GM13976 (cell line): ENCODE measurements at regions of chr4 and their contacts with region 1.

Region 1: DNA sequence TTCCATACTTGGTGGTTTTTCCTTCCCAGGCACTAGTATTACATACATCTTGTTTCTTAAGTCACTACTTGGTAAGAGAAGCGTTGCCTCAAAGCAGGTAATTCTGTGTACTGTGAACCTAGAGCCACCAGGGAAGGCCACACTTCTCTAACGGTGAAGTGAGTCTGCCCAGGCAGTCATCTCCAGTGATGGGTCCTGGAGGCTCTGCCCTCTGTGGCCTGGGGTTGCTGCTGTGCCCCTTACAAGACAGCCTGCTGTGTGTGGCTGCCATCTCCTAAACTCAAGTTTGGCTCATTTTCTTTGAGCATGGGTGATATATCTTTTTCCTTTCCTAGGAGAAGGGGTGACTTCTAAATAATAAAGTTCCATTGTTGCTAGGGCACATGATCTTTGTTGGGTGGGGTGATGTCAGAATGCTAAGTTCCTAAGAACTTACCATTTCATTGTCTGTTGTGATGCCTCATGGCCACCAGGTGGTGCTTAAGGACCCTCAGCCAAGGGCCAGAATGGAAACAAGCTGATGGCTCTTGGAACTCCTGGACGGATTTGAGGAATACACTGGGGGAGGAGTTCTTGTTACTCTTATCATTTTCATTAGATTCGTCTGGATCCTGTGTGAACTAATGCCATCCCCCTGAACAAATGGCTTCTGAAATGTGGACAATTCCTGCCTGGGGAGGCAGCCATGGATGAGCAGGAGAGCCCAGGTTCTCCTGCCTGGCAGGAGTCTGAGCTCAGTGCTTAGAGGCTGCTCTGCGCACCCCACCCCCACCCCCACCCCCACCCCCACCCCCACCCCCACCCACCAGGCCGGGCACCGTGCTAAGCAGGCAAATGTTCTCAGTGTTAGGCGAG is 41.1 kb upstream of the WDR1 start:
- DNase-seq: peak; percentile 79
- CTCF ChIP-seq: peak; percentile 74

Region 2: DNA sequence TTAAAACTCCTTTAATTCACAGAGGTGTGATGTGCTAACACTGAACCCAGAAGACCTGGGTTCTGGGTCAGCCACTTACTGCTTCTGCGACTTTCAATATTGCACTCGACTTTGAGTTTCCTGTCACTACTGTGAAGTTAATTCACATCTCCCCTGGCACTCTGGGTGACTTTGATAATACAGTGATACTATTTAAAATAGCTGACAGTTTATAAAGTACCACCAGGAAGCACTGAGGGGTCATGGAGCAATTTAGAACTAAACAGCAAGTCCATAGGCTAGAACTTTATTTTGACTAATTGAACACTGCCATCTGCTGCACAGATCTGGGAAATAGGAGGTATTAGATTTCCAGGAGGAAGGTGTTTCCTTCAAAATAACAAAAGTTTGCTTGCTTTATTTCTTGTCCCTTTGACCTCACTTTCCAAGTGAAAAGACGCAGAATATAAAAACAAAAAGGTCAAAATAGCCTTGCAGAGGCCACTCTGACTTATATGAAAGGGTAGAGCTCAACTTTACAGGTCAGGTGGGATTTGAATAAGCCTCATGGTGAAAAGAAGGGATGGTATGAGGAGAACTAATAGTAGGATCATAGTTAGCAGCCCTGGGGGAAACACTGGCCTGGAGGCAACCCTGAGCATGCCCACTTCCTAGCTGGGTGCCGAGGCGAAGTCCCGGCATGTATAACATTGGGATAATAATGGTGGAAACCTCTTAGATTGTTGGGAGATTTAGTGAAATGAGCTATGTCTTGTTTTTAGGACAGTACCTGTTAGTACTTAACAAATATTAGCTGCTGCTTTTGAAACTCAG is 246.1 kb after region 1 on chr4:
- in situ Hi-C with region 1: loop called (anchors 25 kb)
- DNase-seq: peak; percentile 25
- CTCF ChIP-seq: peak; percentile 29